Stomach (tissue), 19 donors: ENCODE measurements at regions of chr1 and their contacts with region 1.

Region 1: GRCh38 chr1:31669786-31670592 is 25.3 kb upstream of the PEF1 start:
- DNase-seq: peak; percentile 94
- H3K4me3 ChIP-seq: peak overlapping the region; percentile 18 to 29 (median 26)
- H3K27ac ChIP-seq: peak overlapping the region; percentile 72 to 88 (median 82)
- H3K4me1 ChIP-seq: peaks cover 34 to 86% (median 61%) of the 10 kb centered on the region in 4 donors
- H3K27me3 ChIP-seq: no peaks in the 10 kb centered on the region
- CTCF ChIP-seq: peak in 2 of 7 experiments; percentile 13 to 50
- EP300 ChIP-seq: no peak
- POLR2A ChIP-seq: no peak

Region 2: GRCh38 chr1:31705080-31705866 is 35.3 kb after region 1 on chr1:
- intact Hi-C with region 1: loop called (anchors 5 kb)
- DNase-seq: peak; percentile 60 to 90
- H3K4me3 ChIP-seq: peak overlapping the region; percentile 0 to 51 (median 48)
- H3K27ac ChIP-seq: peak overlapping the region; percentile 78 to 93 (median 85)
- H3K4me1 ChIP-seq: peaks cover 50 to 70% (median 59%) of the 10 kb centered on the region in 4 donors
- H3K27me3 ChIP-seq: peaks cover 0 to 16% (median 7%) of the 10 kb centered on the region in 3 donors
- CTCF ChIP-seq: peak in 2 of 7 experiments; percentile 21 to 32
- EP300 ChIP-seq: no peak
- POLR2A ChIP-seq: no peak

Region 3: DNA sequence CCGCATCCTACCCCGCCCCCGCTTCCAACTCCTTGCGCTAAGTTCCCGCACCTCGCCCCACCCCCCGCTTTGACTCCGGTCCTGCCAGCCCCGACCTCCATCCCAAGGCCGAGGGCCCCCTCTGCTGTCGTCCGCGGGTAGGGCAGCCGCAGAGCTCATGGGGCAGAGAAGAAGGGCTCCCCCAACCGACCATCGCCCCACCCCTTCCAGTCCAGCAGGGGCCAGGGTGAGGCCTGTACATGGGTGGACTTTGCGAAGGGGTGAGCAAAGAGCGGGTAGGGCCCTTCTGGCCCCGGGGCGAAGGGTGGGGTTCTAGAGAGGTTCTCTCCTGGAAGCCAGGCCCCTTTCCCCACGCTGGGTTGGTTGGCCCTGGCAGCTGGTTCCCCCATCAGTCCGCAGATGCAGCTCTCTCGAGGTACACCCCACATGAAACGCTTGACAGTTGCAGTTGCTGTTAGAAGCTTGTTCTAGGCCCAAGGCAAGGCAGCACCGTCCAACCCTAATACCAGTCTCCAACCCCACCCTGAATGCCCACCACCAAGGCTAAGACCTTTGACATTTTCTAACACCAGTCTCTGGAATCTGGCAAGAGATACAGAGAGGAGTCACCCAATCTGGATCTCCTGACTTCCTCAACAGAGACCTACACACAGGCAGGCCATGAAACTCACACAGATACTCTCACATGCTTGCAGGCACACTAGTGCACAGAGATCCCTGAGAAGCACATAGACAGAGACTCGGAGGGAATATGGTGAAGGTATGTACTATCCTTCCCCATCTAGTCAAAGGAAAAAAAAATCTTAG is 119.5 kb after region 1 on chr1:
- intact Hi-C with region 1: loop called (anchors 5 kb)
- DNase-seq: peak; percentile 97 to 98
- H3K4me3 ChIP-seq: peak overlapping the region; percentile 58 to 74 (median 66)
- H3K27ac ChIP-seq: peak overlapping the region; percentile 85 to 90 (median 85)
- H3K4me1 ChIP-seq: peaks cover 4 to 20% (median 13%) of the 10 kb centered on the region in 4 donors
- H3K27me3 ChIP-seq: peaks cover 0 to 5% (median 0%) of the 10 kb centered on the region in 3 donors
- CTCF ChIP-seq: peak in 6 of 7 experiments; percentile 80 to 98 (median 96)
- EP300 ChIP-seq: no peak
- POLR2A ChIP-seq: no peak